BJ (cell line): ENCODE measurements at regions of chr7 and their contacts with region 1.

Region 1: GRCh38 chr7:79806161-79806734 is 328.4 kb upstream of the GNAI1 start:
- DNase-seq: no peak
- H3K4me3 ChIP-seq: no peak overlapping the region
- H3K27me3 ChIP-seq: no peaks in the 10 kb centered on the region
- CTCF ChIP-seq: peak; percentile 50

Region 2: DNA sequence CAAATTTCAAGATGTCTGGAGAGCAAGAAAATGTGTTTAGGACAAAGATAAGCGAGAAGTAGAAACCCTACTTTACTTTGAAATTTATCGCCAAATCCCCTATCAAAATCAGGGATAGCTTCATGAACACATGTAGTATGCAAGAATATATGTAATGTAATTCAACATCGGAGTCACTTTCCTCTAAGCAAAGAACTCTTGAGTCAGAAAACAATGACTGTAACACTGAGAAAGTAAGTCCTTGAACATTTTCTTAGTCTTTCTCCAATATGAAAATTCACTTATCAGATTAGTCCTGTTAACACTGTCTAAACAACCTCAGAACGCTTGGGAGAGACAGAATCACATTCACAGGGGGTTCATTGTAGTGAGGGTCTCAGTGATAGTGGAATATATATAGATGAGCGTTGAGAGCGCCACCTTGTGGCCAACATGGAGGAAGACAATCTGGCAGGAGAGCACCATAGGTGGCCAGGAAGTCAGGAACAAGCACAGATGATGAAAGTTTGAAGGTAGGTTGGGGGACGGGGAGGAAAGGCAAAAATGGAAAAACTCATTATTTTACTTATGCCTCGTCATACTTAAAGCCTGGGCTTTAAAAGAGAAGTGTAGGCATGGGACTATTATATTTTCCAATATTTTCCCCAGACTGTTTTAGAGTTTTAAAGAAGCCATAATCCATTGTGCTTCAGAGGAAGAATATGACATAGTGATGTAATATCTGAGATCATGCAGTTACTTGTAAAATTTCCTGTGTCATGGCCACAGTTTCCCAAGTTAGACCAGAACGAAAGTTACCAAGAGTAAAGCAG is 212.9 kb after region 1 on chr7:
- CTCF ChIA-PET with region 1: interaction called, 15 read pairs
- POLR2A ChIA-PET with region 1: no interaction called
- DNase-seq: no peak
- H3K4me3 ChIP-seq: no peak overlapping the region
- H3K27me3 ChIP-seq: no peaks in the 10 kb centered on the region
- CTCF ChIP-seq: peak; percentile 82